ENCODE measurements at regions of chr6 and their contacts with region 1.

Region 1: DNA sequence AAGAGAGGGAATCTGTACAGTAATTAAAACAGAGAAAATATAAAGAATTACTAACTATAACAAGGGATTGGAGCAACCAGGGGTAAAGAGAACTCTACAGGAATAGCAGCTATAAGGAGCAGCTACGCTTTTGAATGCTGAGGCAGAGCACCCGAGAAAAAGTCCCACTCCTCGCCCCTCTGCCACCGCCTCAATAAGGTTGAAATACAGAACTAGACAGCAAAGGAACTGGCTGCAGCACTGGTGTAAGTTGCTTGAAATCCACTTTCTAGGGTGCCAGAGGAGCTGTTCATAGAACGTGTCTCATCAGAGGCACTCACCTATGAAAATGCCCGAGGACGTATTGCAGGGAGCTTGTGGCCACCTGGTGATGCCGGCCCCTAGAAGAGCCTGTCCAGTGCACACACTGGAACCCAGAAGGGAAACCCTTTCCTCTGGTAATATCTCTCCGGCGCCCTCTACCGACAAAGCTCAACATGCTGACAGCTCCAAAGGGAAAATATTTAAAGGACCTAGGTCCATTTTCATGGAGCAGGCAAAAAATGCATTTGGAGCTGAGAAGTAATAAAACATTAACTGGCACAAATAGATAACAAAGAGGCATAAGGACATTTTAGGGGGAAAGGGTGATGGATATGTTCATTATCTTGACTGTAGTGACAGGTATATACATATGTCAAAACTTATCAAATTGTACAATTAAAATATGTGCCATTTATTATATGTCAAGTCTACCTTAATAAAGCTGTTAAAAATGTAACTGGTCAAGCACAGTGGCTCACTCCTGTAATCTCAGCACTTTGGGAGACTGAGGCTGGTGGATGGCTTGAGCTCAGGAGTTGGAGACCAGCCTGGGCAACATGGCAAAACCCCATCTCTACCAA is 137.4 kb upstream of the HDAC2 start:
- DNase-seq: peak; percentile 25
- CTCF ChIP-seq: peak; percentile 72

Region 2: DNA sequence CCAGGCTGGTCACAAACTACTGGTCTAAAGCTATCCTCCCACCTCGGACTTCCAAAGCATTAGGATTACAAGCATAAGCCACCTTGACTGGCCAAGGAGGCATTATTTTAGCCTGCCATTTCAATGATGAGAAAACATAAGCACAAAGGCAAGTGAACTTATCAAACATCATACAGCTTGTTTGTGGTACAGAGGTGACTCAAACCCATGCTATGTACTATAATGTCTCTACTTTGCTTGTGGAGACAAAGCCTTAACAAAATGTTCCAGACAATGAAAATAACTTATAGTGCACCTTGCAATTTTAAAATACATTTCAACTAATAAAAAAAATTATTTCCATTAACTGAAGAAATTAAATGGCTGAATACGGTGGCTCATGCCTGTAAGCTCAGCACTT is 163.7 kb before region 1 on chr6:
- CTCF ChIA-PET with region 1: no interaction called
- POLR2A ChIA-PET with region 1: no interaction called
- DNase-seq: no peak
- CTCF ChIP-seq: no peak

Region 3: DNA sequence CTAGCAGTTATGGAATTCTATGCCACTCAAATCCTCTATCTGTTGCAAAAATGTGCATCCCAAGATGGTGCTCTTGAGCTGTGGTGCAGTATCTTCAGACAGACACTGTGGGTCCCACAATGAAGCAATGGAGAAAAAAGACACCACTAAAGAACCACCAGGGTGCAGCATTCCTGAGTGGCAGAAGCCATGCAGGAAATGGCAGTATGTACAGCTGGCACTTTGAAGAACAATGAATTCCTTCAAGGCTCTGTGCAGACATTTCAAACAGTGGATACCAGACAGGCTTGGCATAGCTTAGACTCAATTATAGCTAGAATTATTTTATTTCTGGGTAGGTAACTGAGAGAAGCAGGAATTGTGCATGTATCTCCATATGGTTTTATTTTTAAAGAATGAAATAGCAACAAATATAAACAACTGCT is 113.4 kb before region 1 on chr6:
- CTCF ChIA-PET with region 1: interaction called, 16 read pairs
- POLR2A ChIA-PET with region 1: no interaction called
- DNase-seq: peak; percentile 35
- CTCF ChIP-seq: peak; percentile 20

Region 4: GRCh38 chr6:114096561-114097172 is 11.7 kb before region 1 on chr6:
- CTCF ChIA-PET with region 1: interaction called, 19 read pairs
- POLR2A ChIA-PET with region 1: no interaction called
- DNase-seq: peak; percentile 27
- CTCF ChIP-seq: peak; percentile 53

Region 5: DNA sequence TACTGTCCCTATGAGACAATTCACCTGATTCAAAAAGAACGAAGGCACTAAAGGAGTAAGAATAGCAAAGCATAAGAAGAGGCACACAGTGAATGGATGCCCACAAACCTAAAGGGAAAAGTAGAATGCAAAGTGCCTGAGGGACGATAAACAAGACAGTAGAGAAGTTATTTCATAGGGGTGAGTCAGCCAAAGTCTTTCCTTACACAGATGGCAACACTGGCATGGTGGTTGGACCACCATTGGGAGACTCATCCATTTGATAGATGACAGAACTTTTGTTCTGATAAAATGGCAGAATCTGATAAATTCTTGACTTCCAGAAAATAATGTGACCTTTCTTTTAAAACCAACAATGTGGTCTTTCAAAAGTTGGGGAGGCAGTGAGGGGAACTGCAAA is 10.7 kb after region 1 on chr6:
- CTCF ChIA-PET with region 1: interaction called, 17 read pairs
- POLR2A ChIA-PET with region 1: no interaction called
- DNase-seq: no peak
- CTCF ChIP-seq: no peak

Region 6: GRCh38 chr6:114125576-114125975 is 17.2 kb after region 1 on chr6:
- CTCF ChIA-PET with region 1: interaction called, 17 read pairs
- POLR2A ChIA-PET with region 1: no interaction called
- DNase-seq: no peak
- CTCF ChIP-seq: no peak

Region 7: DNA sequence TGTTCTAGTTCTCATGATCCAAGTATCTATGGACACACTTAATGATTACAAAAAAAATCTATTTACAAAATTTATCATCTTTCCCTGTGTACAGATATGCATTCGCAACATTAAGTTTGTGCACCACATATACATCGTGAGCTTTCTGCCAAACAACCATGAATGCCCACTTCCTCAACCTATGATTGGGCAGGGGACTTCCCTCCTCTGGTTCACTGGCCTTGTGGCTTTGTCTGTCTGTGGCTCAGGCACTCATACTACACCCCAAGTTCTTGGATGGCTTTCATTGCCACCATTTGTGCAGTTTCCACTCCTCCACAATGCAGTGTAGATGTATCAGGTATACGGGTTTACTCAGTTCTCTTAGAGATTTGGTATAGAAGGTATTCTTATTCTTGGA is 159.5 kb after region 1 on chr6:
- CTCF ChIA-PET with region 1: no interaction called
- POLR2A ChIA-PET with region 1: no interaction called
- DNase-seq: no peak
- CTCF ChIP-seq: no peak

Region 8: DNA sequence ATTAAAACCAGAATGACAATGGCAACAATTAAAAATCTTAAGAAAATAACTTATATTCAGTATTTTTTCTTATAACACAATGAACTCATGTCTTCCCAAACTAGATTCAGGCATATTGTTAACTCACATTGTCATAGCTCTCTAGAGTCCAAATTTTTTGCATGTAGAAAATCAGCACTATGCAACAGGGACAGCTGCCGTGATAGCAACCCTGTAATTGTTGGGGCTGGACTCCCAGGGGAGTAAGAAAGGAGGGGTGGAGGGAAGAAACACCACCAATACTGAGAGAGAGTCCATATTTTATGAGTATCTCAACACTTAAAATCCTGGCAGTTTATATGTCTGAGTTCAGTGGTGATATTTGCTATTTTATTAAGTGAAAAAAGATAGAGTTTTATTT is 324.0 kb after region 1 on chr6:
- CTCF ChIA-PET with region 1: no interaction called
- POLR2A ChIA-PET with region 1: no interaction called
- DNase-seq: no peak
- CTCF ChIP-seq: no peak